Activated CD8-positive, alpha-beta T cell treated with anti-CD3 and anti-CD28 coated beads for 36 hours (primary cell): ENCODE measurements at regions of chr1 and their contacts with region 1.

Region 1: DNA sequence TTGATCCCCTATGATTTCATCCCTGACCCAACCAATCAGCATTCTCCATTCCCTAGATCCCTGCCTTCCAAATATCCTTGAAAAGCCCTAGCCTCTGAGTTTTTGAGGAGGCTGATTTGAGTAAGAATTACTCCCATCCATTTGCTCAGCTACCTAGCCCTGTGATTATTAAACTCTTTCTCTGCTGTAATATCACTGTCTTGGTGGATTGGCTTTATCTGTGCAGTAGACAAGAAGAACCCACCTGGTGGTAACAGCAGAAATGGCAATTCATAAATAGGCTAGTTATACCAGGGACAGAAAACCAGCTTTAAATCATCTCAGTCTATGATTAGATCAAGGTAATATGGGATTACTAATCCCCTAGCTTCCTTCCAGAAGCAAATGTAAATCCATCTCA is 13.0 kb downstream of the IL20 start:
- DNase-seq: no peak
- ATAC-seq: peak; percentile 49
- H3K4me3 Mint-ChIP-seq: no peak overlapping the region
- H3K27ac Mint-ChIP-seq: no peak overlapping the region
- H3K4me1 Mint-ChIP-seq: peaks cover 3% of the 10 kb centered on the region
- H3K27me3 Mint-ChIP-seq: no peaks in the 10 kb centered on the region
- CTCF ChIP-seq: no peak

Region 2: GRCh38 chr1:206890690-206891089 is 12.2 kb after region 1 on chr1:
- CTCF ChIA-PET with region 1: interaction called, 14 read pairs
- POLR2A ChIA-PET with region 1: interaction called, 4 read pairs
- intact Hi-C with region 1: no loop called
- DNase-seq: no peak
- ATAC-seq: no peak
- H3K4me3 Mint-ChIP-seq: no peak overlapping the region
- H3K27ac Mint-ChIP-seq: peak overlapping the region; percentile 4
- H3K4me1 Mint-ChIP-seq: peaks cover 52% of the 10 kb centered on the region
- H3K27me3 Mint-ChIP-seq: no peaks in the 10 kb centered on the region
- CTCF ChIP-seq: no peak